ENCODE measurements at regions of chr1 and their contacts with region 1.

Region 1: DNA sequence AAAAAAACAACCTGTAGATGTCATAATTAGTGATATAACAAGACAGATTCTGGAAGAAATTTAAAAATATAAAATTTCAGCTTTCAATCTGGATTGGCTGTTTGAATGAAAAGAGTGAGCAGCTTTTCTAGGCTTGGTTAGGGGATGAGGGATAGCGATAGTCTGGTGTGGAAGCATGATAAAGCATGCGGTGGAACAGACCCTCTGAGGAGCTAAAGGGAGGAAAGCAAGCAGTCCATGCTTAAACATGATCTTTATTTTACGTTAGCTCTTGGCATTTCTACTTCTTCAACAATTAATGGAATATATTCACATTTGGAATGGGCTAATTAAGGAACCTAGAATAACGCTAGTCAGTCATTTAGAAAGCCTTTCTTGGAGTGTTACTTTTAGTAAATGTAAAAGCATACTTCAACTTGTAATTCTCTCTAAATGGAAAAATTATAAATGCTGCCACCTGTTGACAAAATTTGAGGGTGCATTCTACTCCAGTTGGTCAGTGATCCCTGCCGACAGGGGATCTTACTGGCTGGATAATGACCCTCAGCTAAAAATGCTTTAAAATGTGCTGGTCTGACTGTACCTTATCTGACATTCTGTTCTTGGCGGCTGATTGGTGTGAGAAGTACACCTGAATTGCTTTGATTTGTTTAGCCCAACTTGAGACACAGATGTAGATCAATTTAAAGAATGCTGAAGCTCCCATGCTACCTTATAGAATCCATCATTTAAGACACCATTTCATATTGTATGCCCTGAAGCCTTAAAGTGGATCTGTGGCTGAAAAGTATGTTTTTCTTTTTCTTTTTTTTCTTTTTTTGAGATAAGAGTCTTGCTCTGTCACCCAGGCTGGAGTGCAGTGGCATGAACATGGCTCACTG is 61.2 kb downstream of the AK4 start:
- DNase-seq: no peak
- H3K4me3 Mint-ChIP-seq: no peak overlapping the region
- H3K27ac Mint-ChIP-seq: peak overlapping the region; percentile 20
- H3K4me1 Mint-ChIP-seq: peaks cover 76% of the 10 kb centered on the region
- H3K27me3 Mint-ChIP-seq: no peaks in the 10 kb centered on the region

Region 2: GRCh38 chr1:64775113-64775512 is 434.1 kb before region 1 on chr1:
- intact Hi-C with region 1: no loop called
- DNase-seq: no peak
- H3K4me3 Mint-ChIP-seq: no peak overlapping the region
- H3K27ac Mint-ChIP-seq: no peak overlapping the region
- H3K4me1 Mint-ChIP-seq: no peaks in the 10 kb centered on the region
- H3K27me3 Mint-ChIP-seq: no peaks in the 10 kb centered on the region

Region 3: GRCh38 chr1:64882574-64883255 is 326.5 kb before region 1 on chr1:
- intact Hi-C with region 1: loop called (anchors 10 kb)
- DNase-seq: no peak
- H3K4me3 Mint-ChIP-seq: no peak overlapping the region
- H3K27ac Mint-ChIP-seq: no peak overlapping the region
- H3K4me1 Mint-ChIP-seq: peaks cover 53% of the 10 kb centered on the region
- H3K27me3 Mint-ChIP-seq: no peaks in the 10 kb centered on the region

Region 4: DNA sequence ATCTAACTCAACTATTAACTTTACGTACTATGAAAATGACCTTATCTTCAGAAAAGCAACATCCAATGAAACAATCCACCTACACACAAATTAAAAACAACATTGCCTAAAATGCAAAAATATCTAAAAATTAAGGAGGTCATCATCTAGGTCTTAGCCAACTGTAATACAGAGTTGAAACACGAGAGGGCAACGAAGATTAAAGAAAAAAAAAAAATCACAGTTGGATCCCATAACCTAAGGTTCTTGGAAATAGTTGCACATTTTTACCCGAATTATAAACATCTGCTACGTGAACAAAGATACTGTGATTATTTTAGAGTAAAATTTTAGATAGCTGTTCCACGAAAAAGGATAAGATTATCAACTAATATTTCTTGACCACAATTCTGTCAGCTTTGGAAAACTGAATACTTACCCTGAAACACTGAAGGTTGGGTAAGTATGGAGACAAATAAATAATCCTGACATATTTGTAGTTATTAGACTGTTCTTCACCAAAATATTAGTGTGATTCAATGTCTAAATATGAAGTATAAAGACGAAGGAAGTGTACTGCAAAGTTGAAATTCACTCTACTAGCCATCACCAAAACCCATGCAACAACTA is 149.2 kb before region 1 on chr1:
- intact Hi-C with region 1: loop called (anchors 1 kb)
- DNase-seq: no peak
- H3K4me3 Mint-ChIP-seq: no peak overlapping the region
- H3K27ac Mint-ChIP-seq: no peak overlapping the region
- H3K4me1 Mint-ChIP-seq: peaks cover 17% of the 10 kb centered on the region
- H3K27me3 Mint-ChIP-seq: no peaks in the 10 kb centered on the region

Region 5: GRCh38 chr1:65075123-65075976 is 133.9 kb before region 1 on chr1:
- intact Hi-C with region 1: loop called (anchors 2 kb)
- DNase-seq: peak; percentile 47
- H3K4me3 Mint-ChIP-seq: no peak overlapping the region
- H3K27ac Mint-ChIP-seq: no peak overlapping the region
- H3K4me1 Mint-ChIP-seq: peaks cover 19% of the 10 kb centered on the region
- H3K27me3 Mint-ChIP-seq: peaks cover 10% of the 10 kb centered on the region

Region 6: GRCh38 chr1:65195495-65196417 is 13.5 kb before region 1 on chr1:
- intact Hi-C with region 1: loop called (anchors 2 kb)
- DNase-seq: no peak
- H3K4me3 Mint-ChIP-seq: no peak overlapping the region
- H3K27ac Mint-ChIP-seq: peak overlapping the region; percentile 26
- H3K4me1 Mint-ChIP-seq: peaks cover 31% of the 10 kb centered on the region
- H3K27me3 Mint-ChIP-seq: no peaks in the 10 kb centered on the region

Region 7: GRCh38 chr1:65254319-65255034 is 45.2 kb after region 1 on chr1:
- intact Hi-C with region 1: loop called (anchors 2 kb)
- DNase-seq: peak; percentile 83
- H3K4me3 Mint-ChIP-seq: peak overlapping the region; percentile 93
- H3K27ac Mint-ChIP-seq: peak overlapping the region; percentile 40
- H3K4me1 Mint-ChIP-seq: peaks cover 34% of the 10 kb centered on the region
- H3K27me3 Mint-ChIP-seq: peaks cover 23% of the 10 kb centered on the region

Region 8: DNA sequence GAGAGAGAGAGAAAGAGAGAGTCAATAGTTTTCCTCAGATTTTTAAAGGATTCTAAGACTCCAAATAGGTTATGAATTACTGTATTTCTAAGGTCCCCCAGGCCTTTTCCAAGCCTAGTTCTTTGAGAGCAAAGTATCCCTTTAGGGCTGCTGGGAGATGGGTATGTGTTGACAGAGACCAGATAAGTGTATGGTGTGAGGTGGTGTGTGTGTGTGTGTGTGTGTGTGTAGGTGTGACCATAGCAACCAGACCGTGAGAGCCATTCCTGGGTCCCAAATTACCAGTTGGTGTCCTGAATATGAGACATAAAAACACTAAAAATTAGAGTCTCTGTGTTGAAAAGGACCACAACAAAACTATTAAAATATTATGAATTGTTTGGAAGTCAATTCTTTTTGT is 58.4 kb after region 1 on chr1:
- intact Hi-C with region 1: no loop called
- DNase-seq: no peak
- H3K4me3 Mint-ChIP-seq: no peak overlapping the region
- H3K27ac Mint-ChIP-seq: no peak overlapping the region
- H3K4me1 Mint-ChIP-seq: peaks cover 30% of the 10 kb centered on the region
- H3K27me3 Mint-ChIP-seq: peaks cover 15% of the 10 kb centered on the region

Measured in activated T-helper 1 cell treated with anti-CD3 and anti-CD28 coated beads, Interleukin-12 subunit alpha, Interleukin-12 subunit beta, Interleukin-2, Interleukin-4 antibody, amounts not matched to agents 30 ng/mL and 10 ng/mL and 1 ng/mL, durations not matched to agents 14 hours and 24 hours and 36 hours (primary cell).